ENCODE measurements at regions of chr22 and their contacts with region 1.

Region 1: DNA sequence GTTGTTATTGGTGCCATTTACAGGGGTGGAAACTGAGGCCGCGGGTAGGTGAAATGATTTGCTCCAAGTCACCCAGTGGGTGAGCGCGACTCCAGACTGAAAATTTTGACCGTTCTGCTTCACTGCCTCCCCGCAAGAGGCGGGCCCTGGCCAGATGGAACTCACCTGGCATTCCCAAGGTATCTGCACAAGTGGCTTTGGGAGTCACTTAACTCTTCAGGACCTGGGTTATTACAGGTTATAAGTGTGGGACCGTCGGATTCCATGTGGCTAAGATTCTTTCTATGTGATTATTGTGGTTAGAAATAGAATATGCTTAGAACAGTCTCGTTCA is 598 bp downstream of the CABIN1 start:
- DNase-seq: no peak
- ATAC-seq: no peak
- H3K4me3 ChIP-seq: peak overlapping the region; percentile 82 to 92
- H3K27ac ChIP-seq: peak overlapping the region in 1 of 2 donors; percentile 65
- H3K4me1 ChIP-seq: no peaks in the 10 kb centered on the region
- H3K27me3 ChIP-seq: no peaks in the 10 kb centered on the region

Region 2: DNA sequence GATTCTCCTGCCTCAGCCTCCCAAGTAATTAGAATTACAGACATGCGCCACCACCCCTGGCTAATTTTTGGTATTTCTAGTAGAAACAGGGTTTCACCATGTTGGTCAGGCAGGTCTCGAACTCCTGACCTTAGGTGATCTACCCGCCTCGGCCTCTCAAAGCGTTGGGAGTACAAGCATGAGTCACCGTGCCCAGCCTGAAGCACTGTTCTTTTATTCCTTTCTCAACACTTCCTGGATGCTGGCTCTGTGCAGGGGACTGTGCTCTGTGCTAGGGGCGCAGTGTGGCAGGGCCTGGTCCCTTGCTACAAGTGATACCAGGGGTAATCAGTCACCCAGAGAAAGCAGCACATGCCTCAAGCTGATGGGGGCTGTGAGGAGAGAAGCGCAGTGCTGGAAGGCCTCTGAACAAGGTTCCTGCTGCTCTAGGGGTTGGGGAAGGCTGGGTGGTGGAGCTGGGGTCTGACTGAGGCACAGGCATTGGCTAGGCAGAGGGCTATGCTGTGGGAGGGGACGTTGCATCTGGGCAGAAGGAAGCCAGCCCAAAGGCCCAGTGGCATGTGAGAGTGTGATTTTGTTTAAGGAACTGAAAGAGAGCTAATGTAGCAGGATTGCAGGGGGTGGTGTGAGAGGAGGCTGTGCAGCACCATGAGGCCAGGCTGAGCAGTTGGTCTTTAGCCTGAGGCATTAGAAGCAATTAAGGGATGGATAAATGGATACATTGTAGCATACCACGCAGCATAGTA is 42.0 kb after region 1 on chr22:
- intact Hi-C with region 1: loop called in 1 of 2 experiments (anchors 5 kb)
- DNase-seq: no peak
- ATAC-seq: no peak
- H3K4me3 ChIP-seq: no peak overlapping the region
- H3K27ac ChIP-seq: no peak overlapping the region
- H3K4me1 ChIP-seq: no peaks in the 10 kb centered on the region
- H3K27me3 ChIP-seq: no peaks in the 10 kb centered on the region

Region 3: DNA sequence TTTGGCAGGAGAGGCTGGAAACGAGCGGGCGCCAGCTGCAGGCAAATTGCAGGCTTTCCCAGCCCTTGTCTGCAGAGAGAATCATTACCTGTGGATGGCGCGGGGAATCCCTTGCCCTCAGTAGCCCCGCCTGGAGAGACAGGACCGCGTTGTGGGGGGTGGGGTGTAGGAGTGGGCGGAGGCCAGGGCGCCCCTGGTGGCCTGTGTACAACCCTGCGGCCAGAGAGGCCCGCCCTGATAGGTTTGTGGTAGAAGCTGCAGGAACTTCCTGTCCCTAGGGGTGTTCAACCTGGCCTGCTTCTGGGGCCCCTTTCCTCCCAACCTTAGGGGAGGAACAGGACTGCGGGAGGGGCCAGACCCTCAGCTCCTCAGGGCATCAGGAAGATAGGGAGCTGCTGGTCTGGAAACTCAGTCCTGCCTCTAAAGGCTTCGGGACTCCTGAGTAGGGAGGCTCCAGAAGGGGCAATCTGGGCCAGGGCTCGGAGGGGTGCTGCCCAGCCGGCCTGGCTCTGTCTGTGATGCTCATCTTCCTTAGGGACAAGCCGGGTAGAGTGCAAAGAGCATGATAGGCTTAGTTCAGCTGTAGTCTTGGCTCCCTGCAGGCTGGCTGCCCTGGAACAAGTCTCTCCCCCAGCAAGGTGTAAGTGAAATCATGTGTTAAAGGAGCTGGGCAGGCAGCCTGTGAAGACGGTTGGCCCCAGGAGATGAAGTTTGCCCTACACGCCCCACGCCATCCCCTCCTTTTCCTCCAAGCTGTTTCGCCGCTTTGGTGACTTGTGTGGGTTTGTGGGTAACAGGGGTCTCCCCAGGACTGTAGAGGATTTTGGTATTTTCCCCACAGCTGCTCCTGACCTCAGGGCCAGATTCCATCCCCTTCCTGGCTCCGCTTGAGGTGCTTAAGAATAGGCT is 145.5 kb after region 1 on chr22:
- intact Hi-C with region 1: loop called in 1 of 2 experiments (anchors 5 kb)
- DNase-seq: peak; percentile 91
- ATAC-seq: peak; percentile 86
- H3K4me3 ChIP-seq: peak overlapping the region; percentile 69 to 91
- H3K27ac ChIP-seq: peak overlapping the region in 1 of 2 donors; percentile 25
- H3K4me1 ChIP-seq: no peaks in the 10 kb centered on the region
- H3K27me3 ChIP-seq: no peaks in the 10 kb centered on the region

Region 4: DNA sequence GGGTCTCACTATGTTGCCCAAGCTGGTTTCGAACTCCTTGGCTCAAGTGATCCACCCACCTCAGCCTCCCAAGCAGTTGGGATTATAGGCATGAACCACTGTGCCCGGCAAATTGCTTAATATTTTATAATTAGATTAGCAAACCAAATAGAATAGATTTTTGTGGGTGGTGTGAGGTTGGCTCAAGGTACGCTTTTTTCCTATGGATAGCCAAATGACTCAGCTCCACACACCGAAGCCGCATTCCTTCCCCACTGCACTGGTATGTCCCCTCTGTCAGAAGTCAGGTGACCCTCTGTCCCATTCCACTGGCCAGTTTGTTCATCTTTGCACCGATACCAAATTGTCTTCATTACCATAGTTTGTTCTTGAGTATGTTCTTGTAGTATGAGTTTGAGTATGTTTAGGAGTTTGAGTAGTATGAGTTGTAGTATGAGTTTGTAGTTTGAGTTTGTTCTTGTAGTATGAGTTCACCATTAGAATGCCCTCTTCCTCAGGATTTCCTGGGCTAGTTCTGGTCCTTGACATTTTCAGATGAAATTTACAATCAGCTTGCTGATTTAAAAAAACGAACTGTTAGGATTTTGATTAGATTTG is 189.0 kb after region 1 on chr22:
- intact Hi-C with region 1: no loop called
- DNase-seq: no peak
- ATAC-seq: no peak
- H3K4me3 ChIP-seq: no peak overlapping the region
- H3K27ac ChIP-seq: no peak overlapping the region
- H3K4me1 ChIP-seq: peaks cover 0 to 2% of the 10 kb centered on the region in 2 donors
- H3K27me3 ChIP-seq: no peaks in the 10 kb centered on the region

Region 5: GRCh38 chr22:24214467-24215285 is 203.0 kb after region 1 on chr22:
- intact Hi-C with region 1: no loop called
- DNase-seq: no peak
- ATAC-seq: peak; percentile 38
- H3K4me3 ChIP-seq: no peak overlapping the region
- H3K27ac ChIP-seq: no peak overlapping the region
- H3K4me1 ChIP-seq: no peaks in the 10 kb centered on the region
- H3K27me3 ChIP-seq: no peaks in the 10 kb centered on the region

Measured in aorta (tissue), 5 donors.